Activated CD4-positive, alpha-beta memory T cell treated with anti-CD3 and anti-CD28 coated beads for 36 hours (primary cell): ENCODE measurements at regions of chr11 and their contacts with region 1.

Region 1: GRCh38 chr11:61061081-61061826 is 41.0 kb upstream of the CD5 start:
- DNase-seq: peak; percentile 94
- H3K4me3 Mint-ChIP-seq: peak overlapping the region; percentile 67
- H3K27ac Mint-ChIP-seq: peak overlapping the region; percentile 98
- H3K4me1 Mint-ChIP-seq: peaks cover 92% of the 10 kb centered on the region
- H3K27me3 Mint-ChIP-seq: no peaks in the 10 kb centered on the region

Region 2: GRCh38 chr11:60913793-60914632 is 147.2 kb before region 1 on chr11 and contains the start of gene TMEM109:
- CTCF ChIA-PET with region 1: no interaction called
- POLR2A ChIA-PET with region 1: interaction called, 3 read pairs
- intact Hi-C with region 1: loop called (anchors 1 kb)
- DNase-seq: peak; percentile 92
- H3K4me3 Mint-ChIP-seq: peak within 1 kb of the TSS; percentile 92
- H3K27ac Mint-ChIP-seq: peak within 1 kb of the TSS; percentile 91
- H3K4me1 Mint-ChIP-seq: peaks cover 56% of the 10 kb centered on the region
- H3K27me3 Mint-ChIP-seq: no peaks in the 10 kb centered on the region
- total RNA-seq, gene TMEM109: 101 to 106 TPM

Region 3: GRCh38 chr11:60985991-60986915 is 75.0 kb before region 1 on chr11:
- CTCF ChIA-PET with region 1: interaction called, 3 read pairs
- POLR2A ChIA-PET with region 1: interaction called, 54 read pairs
- intact Hi-C with region 1: loop called (anchors 1 kb)
- DNase-seq: peak; percentile 97
- H3K4me3 Mint-ChIP-seq: peak overlapping the region; percentile 84
- H3K27ac Mint-ChIP-seq: peak overlapping the region; percentile 99
- H3K4me1 Mint-ChIP-seq: peaks cover 91% of the 10 kb centered on the region
- H3K27me3 Mint-ChIP-seq: no peaks in the 10 kb centered on the region

Region 4: GRCh38 chr11:61021661-61022212 is 39.5 kb before region 1 on chr11:
- CTCF ChIA-PET with region 1: interaction called, 3 read pairs
- POLR2A ChIA-PET with region 1: interaction called, 27 read pairs
- intact Hi-C with region 1: loop called (anchors 2 kb)
- DNase-seq: peak; percentile 94
- H3K4me3 Mint-ChIP-seq: peak overlapping the region; percentile 75
- H3K27ac Mint-ChIP-seq: peak overlapping the region; percentile 99
- H3K4me1 Mint-ChIP-seq: peaks cover 89% of the 10 kb centered on the region
- H3K27me3 Mint-ChIP-seq: no peaks in the 10 kb centered on the region

Region 5: DNA sequence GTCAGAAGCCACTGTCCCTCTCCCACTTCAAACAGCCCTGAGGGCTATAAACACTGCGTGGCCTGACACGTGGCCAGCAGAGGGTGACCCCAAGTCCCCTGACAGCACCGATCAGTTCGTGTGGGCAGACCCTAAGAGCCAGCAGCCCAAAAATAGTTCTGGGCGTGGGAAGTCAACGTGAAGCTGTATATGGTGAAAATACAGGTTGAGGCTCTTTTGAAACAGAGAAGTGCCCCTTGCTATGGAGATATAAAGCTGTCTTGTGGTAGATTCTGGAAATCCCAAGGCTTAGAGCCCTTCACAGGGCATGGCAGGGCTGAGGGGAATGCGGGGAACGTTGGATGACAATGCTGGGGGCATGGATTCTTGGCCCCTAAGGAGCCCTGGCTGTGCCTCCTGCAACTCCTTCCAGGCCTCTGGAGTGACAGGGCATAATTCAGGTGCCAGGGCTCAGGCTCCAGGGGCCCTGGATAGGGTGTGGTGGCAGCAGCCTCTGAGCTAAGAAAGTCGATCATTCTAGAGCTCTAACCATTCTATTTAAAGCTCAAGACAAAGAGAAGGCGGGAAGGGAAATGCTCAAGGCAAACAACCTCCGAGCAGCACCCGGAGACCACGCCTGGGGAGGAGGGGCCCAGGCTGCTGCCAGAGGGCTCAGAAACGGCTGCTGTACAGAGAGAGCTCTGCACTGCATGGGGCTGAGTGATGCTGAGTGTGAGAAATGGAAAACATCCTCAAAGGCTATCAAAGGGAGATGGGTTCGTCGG is 19.3 kb before region 1 on chr11:
- CTCF ChIA-PET with region 1: interaction called, 5 read pairs
- POLR2A ChIA-PET with region 1: interaction called, 85 read pairs
- intact Hi-C with region 1: loop called (anchors 1 kb)
- DNase-seq: peak; percentile 92
- H3K4me3 Mint-ChIP-seq: peak overlapping the region; percentile 68
- H3K27ac Mint-ChIP-seq: peak overlapping the region; percentile 96
- H3K4me1 Mint-ChIP-seq: peaks cover 71% of the 10 kb centered on the region
- H3K27me3 Mint-ChIP-seq: no peaks in the 10 kb centered on the region

Region 6: DNA sequence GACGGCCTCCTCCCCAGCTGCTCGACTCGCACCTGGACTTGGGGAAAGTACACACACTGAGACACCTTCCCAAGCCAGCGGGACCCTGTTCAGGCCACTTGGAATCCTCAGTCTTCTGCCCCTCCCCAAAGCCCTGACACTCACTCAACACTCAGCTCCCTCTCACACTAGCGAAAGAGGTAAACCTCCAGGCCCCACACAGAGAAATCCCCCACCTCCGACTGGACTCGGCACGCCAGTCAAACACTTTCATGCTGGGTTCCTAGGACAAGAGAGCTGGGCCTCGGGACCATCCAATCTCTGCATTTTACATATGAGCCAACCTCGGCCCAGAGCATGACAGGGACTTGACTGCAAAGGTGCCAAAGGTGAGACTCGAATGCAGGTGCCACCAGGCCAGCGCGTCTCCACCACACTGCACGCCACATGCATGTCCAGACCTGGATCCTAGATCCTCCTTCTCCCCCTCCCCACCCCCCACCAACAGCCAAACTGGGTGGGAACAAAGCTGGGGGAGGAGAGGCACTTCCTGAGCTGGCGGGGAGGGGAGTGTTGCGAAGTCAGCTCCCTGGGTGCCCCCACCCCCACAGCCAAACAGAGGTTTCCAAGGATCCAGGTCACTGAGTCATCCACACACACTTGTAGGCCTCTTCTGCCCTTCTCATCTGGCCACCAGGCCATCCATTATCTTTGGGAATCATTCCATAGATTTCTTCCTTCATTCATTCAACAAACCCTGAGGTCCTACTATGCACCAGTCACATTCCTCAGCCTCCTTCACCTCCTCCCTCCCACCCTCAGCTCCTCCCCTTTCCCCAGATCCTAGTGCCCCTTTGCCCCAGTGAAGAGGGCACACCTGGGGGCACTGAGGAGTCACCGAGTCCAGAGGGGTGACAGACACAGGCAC is 30.4 kb after region 1 on chr11:
- CTCF ChIA-PET with region 1: interaction called, 7 read pairs
- POLR2A ChIA-PET with region 1: interaction called, 45 read pairs
- intact Hi-C with region 1: loop called (anchors 1 kb)
- DNase-seq: peak; percentile 85
- H3K4me3 Mint-ChIP-seq: peak overlapping the region; percentile 96
- H3K27ac Mint-ChIP-seq: peak overlapping the region; percentile 99
- H3K4me1 Mint-ChIP-seq: peaks cover 72% of the 10 kb centered on the region
- H3K27me3 Mint-ChIP-seq: no peaks in the 10 kb centered on the region

Region 7: GRCh38 chr11:61120706-61121191 is 59.5 kb after region 1 on chr11:
- CTCF ChIA-PET with region 1: no interaction called
- POLR2A ChIA-PET with region 1: interaction called, 6 read pairs
- intact Hi-C with region 1: loop called (anchors 1 kb)
- DNase-seq: no peak
- H3K4me3 Mint-ChIP-seq: no peak overlapping the region
- H3K27ac Mint-ChIP-seq: peak overlapping the region; percentile 85
- H3K4me1 Mint-ChIP-seq: peaks cover 59% of the 10 kb centered on the region
- H3K27me3 Mint-ChIP-seq: no peaks in the 10 kb centered on the region